IMR-90 (cell line): ENCODE measurements at regions of chr14 and their contacts with region 1.

Region 1: DNA sequence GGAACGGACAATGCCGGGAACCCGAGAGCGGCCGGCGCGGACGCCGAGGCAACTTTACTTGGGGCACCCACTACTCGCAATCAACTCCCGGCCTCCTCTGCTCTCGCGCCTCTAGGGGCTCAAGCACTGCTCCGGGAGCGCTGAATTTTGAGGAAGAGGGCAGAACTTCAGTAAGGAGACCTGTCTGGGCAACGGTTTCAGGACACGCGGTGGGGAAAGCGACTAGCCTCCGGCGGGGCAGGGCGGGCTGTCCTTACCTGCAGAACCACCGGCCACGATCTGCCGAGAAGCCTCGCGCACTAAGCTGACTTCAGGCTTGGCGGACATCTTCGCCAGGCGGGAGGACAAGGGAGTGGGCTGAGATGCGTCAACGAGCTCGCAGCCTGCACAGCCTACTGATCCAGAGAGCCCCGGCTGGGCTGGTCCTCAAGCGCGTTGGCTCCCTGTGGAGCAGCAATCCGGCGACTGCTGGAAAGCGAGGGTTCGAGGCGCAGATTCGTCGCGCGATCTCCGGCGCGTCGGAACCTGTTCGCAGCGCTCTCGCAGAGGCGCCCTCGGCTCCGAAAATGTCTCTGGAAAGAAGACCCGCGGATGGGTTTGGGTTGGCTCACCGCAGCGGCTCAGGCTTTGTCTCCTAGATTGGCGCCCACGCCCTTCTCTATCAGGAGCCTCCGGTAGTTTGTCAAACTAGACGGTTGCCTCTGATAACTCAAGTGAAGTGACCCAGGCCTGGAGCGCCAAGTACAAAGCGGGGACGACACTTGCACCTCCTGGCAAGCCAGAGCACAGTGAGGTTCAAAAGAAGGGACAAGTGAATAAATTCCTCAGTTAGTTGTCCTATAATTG is at the start of gene SLC25A21:
- DNase-seq: peak; percentile 82
- ATAC-seq: peak; percentile 96
- H3K4me3 ChIP-seq: peak within 1 kb of the TSS; percentile 78
- H3K27ac ChIP-seq: peak within 1 kb of the TSS; percentile 94
- H3K4me1 ChIP-seq: 0 out of 2 replicates have a peak, but pooled peaks cover 2% of the 10 kb centered on the region
- H3K27me3 ChIP-seq: no peaks in the 10 kb centered on the region
- CTCF ChIP-seq: peak; percentile 7; the same call in 1 of the 2 replicates
- POLR2A ChIP-seq: peak; percentile 76; the same call in 1 of the 2 replicates
- RAD21 ChIP-seq: no peak
- total RNA-seq, gene SLC25A21: 0.90 and 2.5 TPM in 2 replicates

Region 2: DNA sequence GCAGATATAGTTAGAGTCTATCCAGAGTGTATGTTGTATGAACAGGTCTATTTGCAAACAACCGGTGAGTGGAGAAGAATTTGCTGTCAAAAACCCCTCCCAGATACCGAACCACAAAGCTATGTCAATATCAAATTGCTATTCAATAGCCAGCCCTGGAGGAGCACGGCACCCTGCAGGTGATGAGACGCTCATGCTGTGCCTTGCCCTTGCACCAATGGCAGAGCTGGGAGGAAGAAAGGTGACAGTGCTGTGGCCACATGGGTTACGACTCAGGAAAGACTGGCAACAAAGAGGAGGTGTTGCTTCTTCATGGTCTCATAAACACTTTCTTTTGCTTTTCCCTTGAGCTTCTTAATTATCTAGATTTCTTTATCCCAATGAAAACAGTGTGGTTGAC is 454.9 kb before region 1 on chr14:
- CTCF ChIA-PET with region 1: no interaction called
- POLR2A ChIA-PET with region 1: no interaction called
- dilution Hi-C with region 1: no loop called
- in situ Hi-C with region 1: no loop called
- intact Hi-C with region 1: no loop called
- DNase-seq: no peak
- ATAC-seq: no peak
- H3K4me3 ChIP-seq: no peak overlapping the region
- H3K27ac ChIP-seq: no peak overlapping the region
- H3K4me1 ChIP-seq: no peaks in the 10 kb centered on the region
- H3K27me3 ChIP-seq: no peaks in the 10 kb centered on the region
- CTCF ChIP-seq: no peak
- POLR2A ChIP-seq: no peak
- RAD21 ChIP-seq: no peak

Region 3: DNA sequence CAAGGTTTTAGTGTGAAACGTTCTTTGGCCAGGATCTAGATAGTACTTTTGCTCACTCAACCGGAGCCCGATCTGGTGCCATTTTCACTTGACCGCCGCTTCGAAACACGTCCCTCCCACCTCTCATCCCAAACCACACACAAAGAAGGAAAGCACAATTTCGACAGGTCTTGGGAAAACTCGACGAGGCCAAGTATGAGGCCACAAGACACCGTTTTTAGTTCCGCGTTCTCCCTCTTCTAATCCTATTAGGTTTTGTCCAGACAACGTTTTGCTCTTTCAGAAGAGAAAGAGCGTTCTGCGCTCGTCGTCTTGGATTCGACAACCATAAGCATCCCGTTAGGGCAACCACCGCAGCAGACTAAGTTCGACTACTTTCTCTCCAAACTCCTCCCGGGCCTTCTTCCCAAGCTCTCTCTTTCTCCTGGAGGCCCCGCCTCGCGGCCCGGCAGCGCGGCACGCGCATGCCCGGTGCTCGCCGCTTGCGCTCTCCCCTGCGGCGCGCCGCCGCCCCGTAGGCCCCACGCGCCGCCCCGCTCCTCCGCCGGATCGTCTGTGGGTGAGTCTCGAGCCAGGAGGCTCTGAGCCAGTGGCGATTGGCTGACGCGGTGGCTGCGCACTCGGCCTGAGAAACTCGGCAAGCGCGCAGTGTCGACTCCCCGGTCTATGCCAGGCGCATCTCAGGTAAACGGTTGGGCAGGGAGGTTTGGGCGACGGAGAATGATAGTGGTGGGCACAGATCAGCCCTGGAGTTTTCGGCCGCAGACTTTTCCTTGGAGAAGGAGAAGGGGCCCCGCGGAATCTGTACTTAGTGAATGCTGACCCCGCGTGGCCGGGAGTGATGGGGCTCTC is 25.4 kb after region 1 on chr14 and contains the start of gene MIPOL1:
- CTCF ChIA-PET with region 1: no interaction called
- POLR2A ChIA-PET with region 1: interaction called, 15 read pairs
- dilution Hi-C with region 1: no loop called
- in situ Hi-C with region 1: no loop called
- intact Hi-C with region 1: loop called (anchors 1 kb)
- DNase-seq: peak; percentile 90
- ATAC-seq: peak; percentile 98
- H3K4me3 ChIP-seq: peak within 1 kb of the TSS; percentile 67
- H3K27ac ChIP-seq: peak within 1 kb of the TSS; percentile 89
- H3K4me1 ChIP-seq: no peaks in the 10 kb centered on the region; the same call in 1 of the 2 replicates
- H3K27me3 ChIP-seq: no peaks in the 10 kb centered on the region
- CTCF ChIP-seq: peak; percentile 43
- POLR2A ChIP-seq: peak; percentile 83
- RAD21 ChIP-seq: peak; percentile 32; the same call in 1 of the 2 replicates
- total RNA-seq, gene MIPOL1: 5.9 and 11.4 TPM in 2 replicates

Region 4: GRCh38 chr14:37972941-37973887 is 801.0 kb after region 1 on chr14:
- CTCF ChIA-PET with region 1: no interaction called
- POLR2A ChIA-PET with region 1: no interaction called
- dilution Hi-C with region 1: no loop called
- in situ Hi-C with region 1: no loop called
- intact Hi-C with region 1: no loop called
- DNase-seq: no peak
- ATAC-seq: no peak; the same call in 1 of the 2 replicates
- H3K4me3 ChIP-seq: no peak overlapping the region
- H3K27ac ChIP-seq: no peak overlapping the region
- H3K4me1 ChIP-seq: no peaks in the 10 kb centered on the region
- H3K27me3 ChIP-seq: no peaks in the 10 kb centered on the region
- CTCF ChIP-seq: no peak
- POLR2A ChIP-seq: no peak
- RAD21 ChIP-seq: no peak